Common myeloid progenitor, CD34-positive (primary cell): ENCODE measurements at regions of chr12 and their contacts with region 1.

Region 1: GRCh38 chr12:57452937-57453509 is 2.1 kb upstream of the INHBE start:
- DNase-seq: peak; percentile 50 to 73 (median 57)
- H3K4me3 ChIP-seq: no peak overlapping the region
- H3K27ac ChIP-seq: no peak overlapping the region
- H3K4me1 ChIP-seq: peaks cover 0 to 18% (median 6%) of the 10 kb centered on the region in 4 experiments
- H3K27me3 ChIP-seq: no peaks in the 10 kb centered on the region

Region 2: DNA sequence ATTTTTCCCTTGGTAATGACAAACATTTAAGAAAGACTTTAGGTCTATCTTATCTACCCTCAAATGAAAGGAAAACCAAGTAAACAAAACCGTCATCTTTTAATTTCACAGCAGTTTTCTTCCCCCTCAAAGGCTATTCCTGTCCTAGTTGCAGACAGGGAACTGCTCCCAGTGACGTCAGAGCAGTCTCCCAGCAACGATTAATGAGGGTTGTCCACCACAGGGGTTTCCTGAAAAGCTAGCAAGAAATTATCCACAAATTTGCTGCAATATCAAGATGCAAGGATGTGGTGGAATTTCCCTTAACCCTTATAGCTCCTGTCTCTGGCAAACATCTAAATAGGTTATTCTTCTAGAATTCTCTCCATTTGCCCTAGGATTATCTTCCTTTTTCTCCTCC is 112.9 kb before region 1 on chr12:
- CTCF ChIA-PET with region 1: interaction called, 12 read pairs
- POLR2A ChIA-PET with region 1: no interaction called
- DNase-seq: peak; percentile 87
- H3K4me3 ChIP-seq: peak overlapping the region in 3 of 7 experiments; percentile 33 to 53 (median 52)
- H3K27ac ChIP-seq: peak overlapping the region; percentile 28 to 75
- H3K4me1 ChIP-seq: peaks cover 0 to 22% (median 9%) of the 10 kb centered on the region in 4 experiments
- H3K27me3 ChIP-seq: no peaks in the 10 kb centered on the region

Region 3: GRCh38 chr12:57430931-57431720 is 21.9 kb before region 1 on chr12 and contains the start of gene R3HDM2:
- CTCF ChIA-PET with region 1: interaction called, 42 read pairs
- POLR2A ChIA-PET with region 1: no interaction called
- DNase-seq: peak; percentile 97 to 98 (median 98)
- H3K4me3 ChIP-seq: peak within 1 kb of the TSS; percentile 13 to 86 (median 72)
- H3K27ac ChIP-seq: peak within 1 kb of the TSS; percentile 96 to 98
- H3K4me1 ChIP-seq: peaks cover 3 to 44% (median 24%) of the 10 kb centered on the region in 4 experiments
- H3K27me3 ChIP-seq: no peaks in the 10 kb centered on the region

Region 4: GRCh38 chr12:57441846-57442427 is 11.1 kb before region 1 on chr12:
- CTCF ChIA-PET with region 1: interaction called, 58 read pairs
- POLR2A ChIA-PET with region 1: no interaction called
- DNase-seq: peak in 2 of 3 donors; percentile 33 to 46
- H3K4me3 ChIP-seq: no peak overlapping the region
- H3K27ac ChIP-seq: no peak overlapping the region
- H3K4me1 ChIP-seq: no peaks in the 10 kb centered on the region
- H3K27me3 ChIP-seq: no peaks in the 10 kb centered on the region